ENCODE measurements at regions of chr11 and their contacts with region 1.

Region 1: GRCh38 chr11:62081378-62082291 is 42.2 kb upstream of the INCENP start:
- DNase-seq: peak; percentile 75 to 81 (median 78)
- H3K4me3 ChIP-seq: no peak overlapping the region
- H3K4me3 Mint-ChIP-seq: peak overlapping the region in 6 of 8 donors; percentile 3 to 84 (median 50)
- H3K27ac ChIP-seq: no peak overlapping the region
- H3K27ac Mint-ChIP-seq: peak overlapping the region in 6 of 7 donors; percentile 1 to 92 (median 50)
- H3K4me1 ChIP-seq: peaks cover 9% of the 10 kb centered on the region
- H3K4me1 Mint-ChIP-seq: peaks cover 3 to 7% (median 6%) of the 10 kb centered on the region in 4 donors
- H3K27me3 ChIP-seq: no peaks in the 10 kb centered on the region
- H3K27me3 Mint-ChIP-seq: peaks cover 0 to 2% of the 10 kb centered on the region in 2 donors

Region 2: DNA sequence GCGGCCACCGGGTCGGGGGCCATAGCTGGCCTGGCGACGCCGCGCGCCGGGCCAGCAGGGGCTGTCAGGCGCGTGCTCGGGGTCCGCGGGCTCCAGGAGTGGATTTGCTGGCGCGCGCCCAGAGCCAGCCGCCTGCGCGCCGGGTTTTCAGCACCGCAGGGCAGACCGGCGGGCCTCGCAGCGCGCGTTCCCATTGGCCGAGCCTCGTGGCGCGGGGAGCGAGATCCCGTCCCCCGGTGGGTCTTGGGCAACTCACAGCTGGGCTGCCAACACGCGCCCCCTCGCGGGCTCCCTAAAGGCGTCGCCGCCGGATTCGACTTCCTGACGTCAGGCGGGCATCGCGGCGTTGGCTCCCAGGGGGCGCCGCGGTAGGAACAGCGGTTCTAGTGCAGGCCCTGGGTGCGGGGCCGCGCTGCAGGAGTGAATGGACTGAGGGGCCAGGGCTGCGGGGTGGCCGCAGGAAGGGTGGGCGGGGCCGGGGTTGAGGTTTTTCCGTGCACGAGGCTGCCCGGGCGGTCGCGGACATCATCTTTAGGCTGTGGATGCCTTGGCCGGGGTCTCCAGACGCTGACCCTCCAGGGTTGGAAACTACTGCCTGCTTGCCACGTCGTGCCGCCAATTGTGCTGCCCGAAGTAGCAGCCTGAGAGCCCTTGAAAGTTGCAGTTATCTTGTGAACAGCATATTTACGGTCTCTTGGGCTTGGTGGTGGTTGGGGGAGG is 264.7 kb before region 1 on chr11 and contains the start of gene FADS1:
- CTCF ChIA-PET with region 1: interaction called, 11 read pairs
- POLR2A ChIA-PET with region 1: interaction called, 5 read pairs
- intact Hi-C with region 1: no loop called
- DNase-seq: peak; percentile 54 to 79 (median 68)
- H3K4me3 ChIP-seq: peak within 1 kb of the TSS; percentile 73 to 77
- H3K4me3 Mint-ChIP-seq: peak within 1 kb of the TSS; percentile 84 to 97 (median 92)
- H3K27ac ChIP-seq: peak within 1 kb of the TSS; percentile 34
- H3K27ac Mint-ChIP-seq: peak within 1 kb of the TSS; percentile 5 to 96 (median 83)
- H3K4me1 ChIP-seq: peaks cover 21% of the 10 kb centered on the region
- H3K4me1 Mint-ChIP-seq: peaks cover 3 to 18% (median 7%) of the 10 kb centered on the region in 4 donors
- H3K27me3 ChIP-seq: peaks cover 10% of the 10 kb centered on the region
- H3K27me3 Mint-ChIP-seq: peaks cover 4 to 19% of the 10 kb centered on the region in 2 donors
- total RNA-seq, gene FADS1: 1.7 to 2.2 TPM

Region 3: GRCh38 chr11:61899146-61899841 is 182.3 kb before region 1 on chr11:
- CTCF ChIA-PET with region 1: interaction called, 387 read pairs
- POLR2A ChIA-PET with region 1: interaction called, 30 read pairs
- intact Hi-C with region 1: loop called (anchors 1 kb)
- DNase-seq: peak; percentile 89 to 92 (median 90)
- H3K4me3 ChIP-seq: no peak overlapping the region
- H3K4me3 Mint-ChIP-seq: peak overlapping the region in 1 of 8 donors; percentile 4
- H3K27ac ChIP-seq: no peak overlapping the region
- H3K27ac Mint-ChIP-seq: peak overlapping the region in 6 of 7 donors; percentile 2 to 93 (median 76)
- H3K4me1 ChIP-seq: peaks cover 7% of the 10 kb centered on the region
- H3K4me1 Mint-ChIP-seq: peaks cover 4 to 6% (median 5%) of the 10 kb centered on the region in 4 donors
- H3K27me3 ChIP-seq: no peaks in the 10 kb centered on the region
- H3K27me3 Mint-ChIP-seq: no peaks in the 10 kb centered on the region

Region 4: GRCh38 chr11:61947486-61948210 is 134.0 kb before region 1 on chr11:
- CTCF ChIA-PET with region 1: interaction called, 132 read pairs
- POLR2A ChIA-PET with region 1: interaction called, 5 read pairs
- intact Hi-C with region 1: loop called (anchors 1 kb)
- DNase-seq: peak; percentile 55 to 64 (median 59)
- H3K4me3 ChIP-seq: no peak overlapping the region
- H3K4me3 Mint-ChIP-seq: no peak overlapping the region
- H3K27ac ChIP-seq: no peak overlapping the region
- H3K27ac Mint-ChIP-seq: peak overlapping the region in 2 of 7 donors; percentile 41 to 82
- H3K4me1 ChIP-seq: no peaks in the 10 kb centered on the region
- H3K4me1 Mint-ChIP-seq: no peaks in the 10 kb centered on the region
- H3K27me3 ChIP-seq: no peaks in the 10 kb centered on the region
- H3K27me3 Mint-ChIP-seq: peaks cover 0 to 3% of the 10 kb centered on the region in 2 donors

Region 5: DNA sequence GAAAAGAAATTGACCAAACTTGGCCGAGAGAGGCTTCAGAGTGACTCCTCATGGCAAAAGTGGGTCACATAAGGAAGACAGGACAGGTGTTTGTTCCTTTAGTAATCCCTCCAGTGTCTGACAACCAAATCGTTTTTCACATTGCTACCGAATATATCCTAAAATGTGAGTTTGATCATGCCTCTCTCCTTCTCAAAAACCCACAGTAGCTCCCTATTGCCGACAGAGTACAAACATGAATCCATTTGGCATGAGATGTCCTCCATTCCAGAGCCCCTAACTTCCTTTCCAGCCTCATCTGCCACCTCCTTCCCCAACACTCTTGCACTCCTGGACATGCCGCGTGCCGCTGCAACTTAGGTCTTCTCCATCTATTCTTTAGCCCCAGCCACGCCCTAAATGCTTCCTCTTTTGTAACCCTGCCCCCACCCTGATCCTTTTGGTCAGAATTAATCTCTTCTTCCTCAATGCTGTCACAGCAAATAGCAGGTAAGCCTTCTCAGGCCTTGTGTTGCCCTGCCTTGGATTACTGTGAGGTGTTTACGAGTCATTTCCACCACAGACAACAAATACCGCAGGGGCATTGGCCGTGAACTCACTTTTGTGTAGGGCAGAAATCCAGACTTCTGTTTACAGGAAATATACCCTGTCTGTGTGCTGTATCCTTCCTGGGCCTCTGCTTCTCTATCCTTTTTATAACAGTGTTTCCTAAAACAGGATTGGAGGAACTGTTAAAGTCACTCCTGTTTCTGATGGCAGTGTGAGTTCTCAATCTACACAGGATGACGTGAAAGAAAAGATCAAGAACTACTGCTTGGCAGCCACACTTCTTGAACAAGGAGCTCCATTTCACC is 48.2 kb before region 1 on chr11:
- CTCF ChIA-PET with region 1: interaction called, 49 read pairs
- POLR2A ChIA-PET with region 1: no interaction called
- intact Hi-C with region 1: no loop called
- DNase-seq: peak in 1 of 5 donors; percentile 19
- H3K4me3 ChIP-seq: no peak overlapping the region
- H3K4me3 Mint-ChIP-seq: no peak overlapping the region
- H3K27ac ChIP-seq: no peak overlapping the region
- H3K27ac Mint-ChIP-seq: peak overlapping the region in 5 of 7 donors; percentile 24 to 91 (median 81)
- H3K4me1 ChIP-seq: no peaks in the 10 kb centered on the region
- H3K4me1 Mint-ChIP-seq: peaks cover 6 to 12% (median 9%) of the 10 kb centered on the region in 4 donors
- H3K27me3 ChIP-seq: no peaks in the 10 kb centered on the region
- H3K27me3 Mint-ChIP-seq: peaks cover 0 to 1% of the 10 kb centered on the region in 2 donors

Region 6: GRCh38 chr11:62069986-62070919 is 11.4 kb before region 1 on chr11:
- CTCF ChIA-PET with region 1: interaction called, 24 read pairs
- POLR2A ChIA-PET with region 1: no interaction called
- intact Hi-C with region 1: no loop called
- DNase-seq: no peak
- H3K4me3 ChIP-seq: no peak overlapping the region
- H3K4me3 Mint-ChIP-seq: no peak overlapping the region
- H3K27ac ChIP-seq: no peak overlapping the region
- H3K27ac Mint-ChIP-seq: no peak overlapping the region
- H3K4me1 ChIP-seq: no peaks in the 10 kb centered on the region
- H3K4me1 Mint-ChIP-seq: no peaks in the 10 kb centered on the region
- H3K27me3 ChIP-seq: no peaks in the 10 kb centered on the region
- H3K27me3 Mint-ChIP-seq: peaks cover 4 to 7% of the 10 kb centered on the region in 2 donors